ENCODE measurements at regions of chr4 and their contacts with region 1.

Region 1: GRCh38 chr4:38983787-38984598 is 48.2 kb downstream of the TMEM156 start:
- DNase-seq: no peak
- ATAC-seq: no peak
- H3K4me3 ChIP-seq: no peak overlapping the region
- H3K4me3 Mint-ChIP-seq: peak overlapping the region; percentile 21
- H3K27ac ChIP-seq: peak overlapping the region in 1 of 2 donors; percentile 86
- H3K27ac Mint-ChIP-seq: peak overlapping the region; percentile 42
- H3K4me1 ChIP-seq: peaks cover 35 to 37% of the 10 kb centered on the region in 2 donors
- H3K4me1 Mint-ChIP-seq: peaks cover 53% of the 10 kb centered on the region
- H3K27me3 ChIP-seq: no peaks in the 10 kb centered on the region
- H3K27me3 Mint-ChIP-seq: no peaks in the 10 kb centered on the region
- CTCF ChIP-seq: no peak

Region 2: GRCh38 chr4:39025552-39026085 is 41.6 kb after region 1 on chr4:
- CTCF ChIA-PET with region 1: interaction called, 7 read pairs
- POLR2A ChIA-PET with region 1: interaction called, 5 read pairs
- intact Hi-C with region 1: loop called (anchors 2 kb)
- DNase-seq: no peak
- ATAC-seq: no peak
- H3K4me3 ChIP-seq: no peak overlapping the region
- H3K4me3 Mint-ChIP-seq: peak overlapping the region; percentile 37
- H3K27ac ChIP-seq: peak overlapping the region; percentile 5 to 74
- H3K27ac Mint-ChIP-seq: peak overlapping the region; percentile 80
- H3K4me1 ChIP-seq: peaks cover 32 to 40% of the 10 kb centered on the region in 2 donors
- H3K4me1 Mint-ChIP-seq: peaks cover 60% of the 10 kb centered on the region
- H3K27me3 ChIP-seq: no peaks in the 10 kb centered on the region
- H3K27me3 Mint-ChIP-seq: no peaks in the 10 kb centered on the region
- CTCF ChIP-seq: no peak

Region 3: DNA sequence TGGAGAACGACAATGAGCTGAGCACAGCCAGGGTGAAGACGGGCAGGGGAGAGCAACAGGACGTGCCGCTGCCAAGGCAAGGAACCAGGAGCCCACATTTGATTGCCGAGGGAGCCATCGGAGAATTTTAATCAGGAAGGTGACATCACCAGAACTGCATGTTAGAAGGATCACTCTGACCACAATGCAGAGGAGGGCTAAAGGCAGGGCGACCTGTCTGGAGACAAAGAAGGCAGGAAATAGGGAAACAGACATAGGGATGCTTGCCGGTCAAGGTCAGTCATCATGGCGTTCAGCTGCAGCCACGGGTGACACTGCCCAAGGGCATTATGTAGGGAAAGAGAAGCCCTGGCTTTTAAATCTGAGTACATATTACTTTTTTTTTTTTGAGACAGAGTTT is 1564.3 kb after region 1 on chr4:
- CTCF ChIA-PET with region 1: no interaction called
- POLR2A ChIA-PET with region 1: no interaction called
- intact Hi-C with region 1: no loop called
- DNase-seq: no peak
- ATAC-seq: no peak
- H3K4me3 ChIP-seq: no peak overlapping the region
- H3K4me3 Mint-ChIP-seq: no peak overlapping the region
- H3K27ac ChIP-seq: no peak overlapping the region
- H3K27ac Mint-ChIP-seq: no peak overlapping the region
- H3K4me1 ChIP-seq: peaks cover 8 to 14% of the 10 kb centered on the region in 2 donors
- H3K4me1 Mint-ChIP-seq: peaks cover 23% of the 10 kb centered on the region
- H3K27me3 ChIP-seq: no peaks in the 10 kb centered on the region
- H3K27me3 Mint-ChIP-seq: no peaks in the 10 kb centered on the region
- CTCF ChIP-seq: no peak